Psoas muscle (tissue), 8 donors: ENCODE measurements at regions of chr6 and their contacts with region 1.

Region 1: DNA sequence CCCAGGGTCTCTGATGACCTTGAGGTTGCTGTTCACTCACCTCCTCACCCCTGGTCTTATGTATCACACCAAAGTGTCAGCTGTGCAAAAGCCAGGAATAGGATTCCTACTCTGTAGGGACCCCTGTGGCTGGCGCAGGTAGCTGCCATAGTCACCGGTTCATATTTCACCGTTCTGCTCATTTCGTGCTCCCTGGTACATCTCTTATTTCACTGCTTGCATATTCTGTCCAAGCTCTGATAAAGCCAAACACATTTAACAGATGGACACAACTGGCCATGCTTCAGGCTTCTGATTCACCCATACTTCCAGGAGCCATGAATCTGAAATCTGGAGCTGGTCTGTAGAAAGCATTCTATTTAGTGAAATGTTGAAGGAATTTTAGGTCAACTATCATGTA is 20.5 kb downstream of the SLC22A3 start:
- DNase-seq: no peak
- ATAC-seq: peak; percentile 79 to 88 (median 86)
- H3K4me3 ChIP-seq: no peak overlapping the region
- H3K27ac ChIP-seq: peak overlapping the region; percentile 18
- H3K4me1 ChIP-seq: peaks cover 3% of the 10 kb centered on the region
- H3K27me3 ChIP-seq: no peaks in the 10 kb centered on the region
- CTCF ChIP-seq: no peak

Region 2: GRCh38 chr6:160386869-160387530 is 18.3 kb after region 1 on chr6:
- intact Hi-C with region 1: loop called in 1 of 2 experiments (anchors 1 kb)
- DNase-seq: peak; percentile 63 to 77
- ATAC-seq: peak; percentile 84 to 92 (median 90)
- H3K4me3 ChIP-seq: no peak overlapping the region
- H3K27ac ChIP-seq: peak overlapping the region; percentile 41
- H3K4me1 ChIP-seq: peaks cover 13% of the 10 kb centered on the region
- H3K27me3 ChIP-seq: no peaks in the 10 kb centered on the region
- CTCF ChIP-seq: no peak